ENCODE measurements at regions of chr9 and their contacts with region 1.

Region 1: DNA sequence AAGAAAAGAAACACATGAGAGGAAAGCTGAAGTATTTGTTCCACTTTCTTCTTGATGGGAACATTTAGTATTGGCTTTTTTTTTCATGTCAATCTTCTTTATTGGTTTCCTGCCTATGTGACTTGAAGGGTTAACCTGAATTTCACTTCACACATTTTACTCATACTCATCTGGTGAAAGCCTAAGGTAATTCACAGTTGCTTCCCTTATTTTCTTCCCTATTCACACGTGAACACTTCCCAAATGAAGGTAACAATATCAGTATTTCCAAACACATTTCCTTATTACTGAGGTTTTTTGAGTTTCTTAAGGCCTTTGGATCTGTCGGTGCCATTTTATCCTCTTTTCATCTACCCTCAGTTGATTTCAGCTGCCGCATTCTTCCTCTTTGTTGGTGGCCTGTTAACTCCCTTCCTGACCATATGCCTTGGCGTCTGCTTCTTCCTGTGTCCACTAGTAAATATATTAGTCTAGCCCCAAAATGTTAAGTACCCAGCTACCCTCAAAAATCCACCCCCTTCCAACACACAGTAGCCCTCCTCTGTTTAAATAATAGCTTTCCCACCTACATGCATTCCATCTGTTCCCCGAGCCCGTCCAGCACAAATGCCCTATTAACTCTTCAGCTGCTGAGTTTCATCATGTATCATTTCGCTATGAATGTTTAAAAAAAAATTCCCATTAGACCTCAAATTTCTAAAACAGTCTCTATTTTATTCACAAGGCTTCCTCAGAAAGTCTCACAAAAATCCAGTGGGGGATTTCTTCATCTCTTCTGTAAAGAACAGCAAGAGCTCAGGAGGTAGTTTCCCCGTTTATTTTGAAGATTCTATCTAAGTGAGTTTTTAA is 97.3 kb downstream of the USP20 start:
- DNase-seq: no peak
- ATAC-seq: peak; percentile 14
- H3K4me3 Mint-ChIP-seq: peak overlapping the region; percentile 41
- H3K27ac Mint-ChIP-seq: peak overlapping the region; percentile 59
- H3K4me1 Mint-ChIP-seq: peaks cover 41% of the 10 kb centered on the region
- H3K27me3 Mint-ChIP-seq: no peaks in the 10 kb centered on the region
- CTCF ChIP-seq: no peak

Region 2: DNA sequence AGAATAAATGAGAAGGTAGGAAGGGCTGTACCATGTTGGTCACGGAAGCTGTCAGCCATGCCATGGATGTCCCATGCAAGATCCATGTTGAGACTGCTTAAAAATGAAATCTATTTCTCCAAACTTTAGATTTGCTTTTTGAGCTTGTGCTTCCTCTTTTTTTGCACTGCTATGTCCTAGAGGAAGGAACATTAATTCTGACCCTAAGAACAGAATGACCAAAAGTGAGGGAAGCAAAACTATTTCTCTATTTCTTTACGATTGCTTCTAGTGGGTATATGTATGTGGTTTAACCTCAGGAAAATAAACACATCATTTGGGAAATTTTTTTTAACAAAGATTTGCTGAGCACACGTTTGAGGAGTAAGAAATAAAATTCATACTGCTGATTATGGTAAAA is 12.7 kb before region 1 on chr9:
- CTCF ChIA-PET with region 1: interaction called, 3 read pairs
- POLR2A ChIA-PET with region 1: interaction called, 3 read pairs
- intact Hi-C with region 1: loop called (anchors 2 kb)
- DNase-seq: no peak
- ATAC-seq: no peak
- H3K4me3 Mint-ChIP-seq: no peak overlapping the region
- H3K27ac Mint-ChIP-seq: no peak overlapping the region
- H3K4me1 Mint-ChIP-seq: peaks cover 24% of the 10 kb centered on the region
- H3K27me3 Mint-ChIP-seq: no peaks in the 10 kb centered on the region
- CTCF ChIP-seq: no peak

Region 3: GRCh38 chr9:129949821-129950220 is 17.3 kb after region 1 on chr9:
- CTCF ChIA-PET with region 1: interaction called, 4 read pairs
- POLR2A ChIA-PET with region 1: interaction called, 7 read pairs
- intact Hi-C with region 1: loop called (anchors 2 kb)
- DNase-seq: no peak
- ATAC-seq: no peak
- H3K4me3 Mint-ChIP-seq: no peak overlapping the region
- H3K27ac Mint-ChIP-seq: no peak overlapping the region
- H3K4me1 Mint-ChIP-seq: peaks cover 27% of the 10 kb centered on the region
- H3K27me3 Mint-ChIP-seq: no peaks in the 10 kb centered on the region
- CTCF ChIP-seq: no peak

Region 4: GRCh38 chr9:130010151-130010988 is 77.8 kb after region 1 on chr9:
- CTCF ChIA-PET with region 1: no interaction called
- POLR2A ChIA-PET with region 1: interaction called, 13 read pairs
- intact Hi-C with region 1: no loop called
- DNase-seq: no peak
- ATAC-seq: peak; percentile 71
- H3K4me3 Mint-ChIP-seq: peak overlapping the region; percentile 58
- H3K27ac Mint-ChIP-seq: peak overlapping the region; percentile 97
- H3K4me1 Mint-ChIP-seq: peaks cover 92% of the 10 kb centered on the region
- H3K27me3 Mint-ChIP-seq: no peaks in the 10 kb centered on the region
- CTCF ChIP-seq: no peak

Region 5: GRCh38 chr9:130213903-130214761 is 281.6 kb after region 1 on chr9:
- CTCF ChIA-PET with region 1: no interaction called
- POLR2A ChIA-PET with region 1: no interaction called
- intact Hi-C with region 1: no loop called
- DNase-seq: no peak
- ATAC-seq: no peak
- H3K4me3 Mint-ChIP-seq: no peak overlapping the region
- H3K27ac Mint-ChIP-seq: no peak overlapping the region
- H3K4me1 Mint-ChIP-seq: no peaks in the 10 kb centered on the region
- H3K27me3 Mint-ChIP-seq: peaks cover 9% of the 10 kb centered on the region
- CTCF ChIP-seq: no peak